Endothelial cell of umbilical vein (primary cell): ENCODE measurements at regions of chr7 and their contacts with region 1.

Region 1: GRCh38 chr7:122402235-122402634 is 97.7 kb upstream of the FEZF1 start:
- DNase-seq: no peak
- H3K4me3 ChIP-seq: no peak overlapping the region
- H3K27ac ChIP-seq: no peak overlapping the region
- H3K4me1 ChIP-seq: no peaks in the 10 kb centered on the region
- H3K27me3 ChIP-seq: no peaks in the 10 kb centered on the region
- CTCF ChIP-seq: no peak
- POLR2A ChIP-seq: no peak

Region 2: GRCh38 chr7:122337011-122337410 is 65.2 kb before region 1 on chr7:
- CTCF ChIA-PET with region 1: no interaction called
- POLR2A ChIA-PET with region 1: no interaction called
- dilution Hi-C with region 1: no loop called
- intact Hi-C with region 1: loop called (anchors 2 kb)
- DNase-seq: no peak
- H3K4me3 ChIP-seq: no peak overlapping the region
- H3K27ac ChIP-seq: no peak overlapping the region
- H3K4me1 ChIP-seq: no peaks in the 10 kb centered on the region
- H3K27me3 ChIP-seq: no peaks in the 10 kb centered on the region
- CTCF ChIP-seq: no peak
- POLR2A ChIP-seq: no peak

Region 3: GRCh38 chr7:122515404-122515803 is 113.2 kb after region 1 on chr7:
- CTCF ChIA-PET with region 1: no interaction called
- POLR2A ChIA-PET with region 1: no interaction called
- dilution Hi-C with region 1: no loop called
- intact Hi-C with region 1: no loop called
- DNase-seq: no peak
- H3K4me3 ChIP-seq: no peak overlapping the region
- H3K27ac ChIP-seq: no peak overlapping the region
- H3K4me1 ChIP-seq: no peaks in the 10 kb centered on the region
- H3K27me3 ChIP-seq: no peaks in the 10 kb centered on the region
- CTCF ChIP-seq: no peak
- POLR2A ChIP-seq: no peak